ENCODE measurements at regions of chr6 and their contacts with region 1.

Region 1: GRCh38 chr6:24494821-24495795 is at the start of gene ALDH5A1:
- DNase-seq: peak; percentile 92
- H3K4me3 Mint-ChIP-seq: peak within 1 kb of the TSS; percentile 84
- H3K27ac Mint-ChIP-seq: peak within 1 kb of the TSS; percentile 49
- H3K4me1 Mint-ChIP-seq: peaks cover 14% of the 10 kb centered on the region
- H3K27me3 Mint-ChIP-seq: peaks cover 2% of the 10 kb centered on the region
- total RNA-seq, gene ALDH5A1: 11.7 TPM in 2 replicates

Region 2: DNA sequence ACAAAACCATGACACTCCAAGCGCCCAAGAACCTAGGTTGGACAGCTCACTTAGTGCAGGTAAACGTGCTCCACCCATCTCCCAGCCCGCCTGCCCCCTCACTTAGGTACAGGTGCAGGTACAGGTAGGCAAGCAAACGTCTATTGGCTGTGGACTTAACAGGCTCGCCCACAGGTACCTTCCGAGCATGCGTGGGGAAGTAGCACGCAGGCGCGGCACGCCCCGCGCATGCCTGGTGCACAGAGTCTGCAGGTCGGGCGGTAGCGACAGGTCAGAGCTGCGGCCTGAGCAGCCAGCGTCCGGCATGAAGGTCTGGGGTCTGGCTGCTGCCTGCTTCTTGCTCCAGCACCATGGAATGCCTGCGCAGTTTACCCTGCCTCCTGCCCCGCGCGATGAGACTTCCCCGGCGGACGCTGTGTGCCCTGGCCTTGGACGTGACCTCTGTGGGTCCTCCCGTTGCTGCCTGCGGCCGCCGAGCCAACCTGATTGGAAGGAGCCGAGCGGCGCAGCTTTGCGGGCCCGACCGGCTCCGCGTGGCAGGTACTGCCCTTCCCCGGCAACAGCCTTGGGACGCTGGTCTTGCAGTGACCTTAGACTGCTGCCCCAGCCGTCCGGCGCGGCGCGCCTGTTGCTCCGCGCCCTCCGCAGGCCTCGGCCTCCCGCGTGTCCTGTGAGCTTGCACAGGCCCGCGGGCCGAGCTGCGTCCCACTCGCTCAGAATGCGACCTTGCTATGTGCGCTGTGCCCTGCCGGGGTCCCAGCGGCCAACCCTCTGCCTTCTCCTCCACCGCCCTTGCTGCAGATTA is 92.2 kb before region 1 on chr6 and contains the start of gene MRS2:
- intact Hi-C with region 1: loop called (anchors 2 kb)
- DNase-seq: peak; percentile 94
- H3K4me3 Mint-ChIP-seq: peak within 1 kb of the TSS; percentile 99
- H3K27ac Mint-ChIP-seq: peak within 1 kb of the TSS; percentile 86
- H3K4me1 Mint-ChIP-seq: peaks cover 22% of the 10 kb centered on the region
- H3K27me3 Mint-ChIP-seq: peaks cover 23% of the 10 kb centered on the region
- total RNA-seq, gene MRS2: 30.1 and 31.6 TPM in 2 replicates

Region 3: DNA sequence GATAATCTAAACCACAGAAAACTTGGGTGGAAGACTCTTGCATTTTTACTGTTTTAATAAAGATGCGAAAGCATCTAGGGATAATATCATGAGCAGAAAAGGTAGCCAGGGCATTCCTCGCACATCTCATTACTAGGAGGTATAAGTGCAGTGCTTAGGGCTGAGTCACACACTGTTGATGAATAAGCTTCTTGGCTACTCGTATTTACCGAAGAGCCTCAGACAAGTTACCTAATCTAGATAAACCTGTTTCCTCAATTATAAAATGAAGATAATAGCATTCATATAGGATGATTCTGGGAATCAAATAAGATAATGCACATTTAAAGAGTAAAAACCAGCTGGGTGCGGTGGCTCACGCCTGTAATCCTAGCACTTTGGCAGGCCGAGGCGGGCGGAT is 151.7 kb after region 1 on chr6:
- intact Hi-C with region 1: loop called (anchors 5 kb)
- DNase-seq: no peak
- H3K4me3 Mint-ChIP-seq: peak overlapping the region; percentile 85
- H3K27ac Mint-ChIP-seq: no peak overlapping the region
- H3K4me1 Mint-ChIP-seq: peaks cover 15% of the 10 kb centered on the region
- H3K27me3 Mint-ChIP-seq: peaks cover 26% of the 10 kb centered on the region